H1 (cell line): ENCODE measurements at regions of chr22 and their contacts with region 1.

Region 1: GRCh38 chr22:49992921-49993648 is 19.5 kb downstream of the IL17REL start:
- DNase-seq: peak in 1 of 2 experiments; percentile 73
- H3K4me3 ChIP-seq: no peak overlapping the region
- H3K27ac ChIP-seq: no peak overlapping the region
- H3K4me1 ChIP-seq: peaks cover 0 to 1% (median 0%) of the 10 kb centered on the region in 4 experiments; a peak in 2 of 7 replicates
- H3K27me3 ChIP-seq: peaks cover 0 to 6% (median 0%) of the 10 kb centered on the region in 4 experiments; a peak in 1 of 7 replicates
- CTCF ChIP-seq: peak; percentile 86 to 97 (median 86)
- EP300 ChIP-seq: no peak
- POLR2A ChIP-seq: no peak
- RAD21 ChIP-seq: peak; percentile 72 to 81

Region 2: GRCh38 chr22:49930739-49931412 is 62.2 kb before region 1 on chr22:
- CTCF ChIA-PET with region 1: interaction called, 11 read pairs
- POLR2A ChIA-PET with region 1: no interaction called
- DNase-seq: no peak
- H3K4me3 ChIP-seq: no peak overlapping the region
- H3K27ac ChIP-seq: no peak overlapping the region
- H3K4me1 ChIP-seq: peaks cover 0 to 8% (median 1%) of the 10 kb centered on the region in 4 experiments; a peak in 2 of 7 replicates
- H3K27me3 ChIP-seq: peaks cover 0 to 12% (median 10%) of the 10 kb centered on the region in 4 experiments; a peak in 6 of 7 replicates
- CTCF ChIP-seq: peak in 2 of 3 experiments; percentile 61 to 62; a peak in 3 of 4 replicates
- EP300 ChIP-seq: no peak
- POLR2A ChIP-seq: no peak
- RAD21 ChIP-seq: peak; percentile 64 to 73

Region 3: DNA sequence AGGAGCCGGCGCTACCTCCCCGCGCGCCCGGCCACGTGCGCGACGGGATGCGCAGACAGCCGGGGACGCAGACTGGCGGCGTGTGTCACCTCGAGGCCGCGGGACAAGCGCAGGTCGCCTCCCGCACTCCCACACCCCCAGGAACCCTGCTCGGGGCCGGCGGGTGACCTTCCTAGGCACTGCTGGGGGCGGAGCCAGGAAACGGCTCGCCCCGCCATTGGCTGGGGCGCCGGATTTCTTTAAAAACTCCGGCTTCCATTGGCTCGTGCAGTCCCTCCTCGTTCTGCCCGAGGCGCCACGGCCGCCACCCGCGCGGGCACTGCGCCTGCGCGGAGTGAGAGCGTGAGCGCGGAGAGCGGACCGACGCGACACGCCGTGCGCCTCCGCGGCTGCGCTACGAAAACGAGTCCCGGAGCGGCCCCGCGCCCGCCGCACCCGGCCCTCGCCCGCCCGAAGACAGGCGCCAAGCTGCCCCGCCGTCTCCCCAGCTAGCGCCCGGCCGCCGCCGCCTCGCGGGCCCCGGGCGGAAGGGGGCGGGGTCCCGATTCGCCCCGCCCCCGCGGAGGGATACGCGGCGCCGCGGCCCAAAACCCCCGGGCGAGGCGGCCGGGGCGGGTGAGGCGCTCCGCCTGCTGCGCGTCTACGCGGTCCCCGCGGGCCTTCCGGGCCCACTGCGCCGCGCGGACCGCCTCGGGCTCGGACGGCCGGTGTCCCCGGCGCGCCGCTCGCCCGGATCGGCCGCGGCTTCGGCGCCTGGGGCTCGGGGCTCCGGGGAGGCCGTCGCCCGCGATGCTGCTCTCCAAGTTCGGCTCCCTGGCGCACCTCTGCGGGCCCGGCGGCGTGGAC is 32.7 kb before region 1 on chr22 and contains the start of gene PIM3:
- CTCF ChIA-PET with region 1: no interaction called
- POLR2A ChIA-PET with region 1: no interaction called
- DNase-seq: peak; percentile 66 to 87
- H3K4me3 ChIP-seq: peak within 1 kb of the TSS; percentile 49 to 79 (median 74)
- H3K27ac ChIP-seq: peak within 1 kb of the TSS; percentile 86; the same call in 1 of the 2 replicates
- H3K4me1 ChIP-seq: peaks cover 0 to 22% (median 12%) of the 10 kb centered on the region in 4 experiments; a peak in 5 of 7 replicates
- H3K27me3 ChIP-seq: peaks cover 0 to 12% (median 6%) of the 10 kb centered on the region in 4 experiments; a peak in 6 of 7 replicates
- CTCF ChIP-seq: no peak
- EP300 ChIP-seq: no peak
- POLR2A ChIP-seq: peak in 1 of 2 experiments; percentile 77; a peak in 2 of 3 replicates
- RAD21 ChIP-seq: no peak
- total RNA-seq, gene PIM3: 30.0 and 31.2 TPM in 2 replicates

Region 4: DNA sequence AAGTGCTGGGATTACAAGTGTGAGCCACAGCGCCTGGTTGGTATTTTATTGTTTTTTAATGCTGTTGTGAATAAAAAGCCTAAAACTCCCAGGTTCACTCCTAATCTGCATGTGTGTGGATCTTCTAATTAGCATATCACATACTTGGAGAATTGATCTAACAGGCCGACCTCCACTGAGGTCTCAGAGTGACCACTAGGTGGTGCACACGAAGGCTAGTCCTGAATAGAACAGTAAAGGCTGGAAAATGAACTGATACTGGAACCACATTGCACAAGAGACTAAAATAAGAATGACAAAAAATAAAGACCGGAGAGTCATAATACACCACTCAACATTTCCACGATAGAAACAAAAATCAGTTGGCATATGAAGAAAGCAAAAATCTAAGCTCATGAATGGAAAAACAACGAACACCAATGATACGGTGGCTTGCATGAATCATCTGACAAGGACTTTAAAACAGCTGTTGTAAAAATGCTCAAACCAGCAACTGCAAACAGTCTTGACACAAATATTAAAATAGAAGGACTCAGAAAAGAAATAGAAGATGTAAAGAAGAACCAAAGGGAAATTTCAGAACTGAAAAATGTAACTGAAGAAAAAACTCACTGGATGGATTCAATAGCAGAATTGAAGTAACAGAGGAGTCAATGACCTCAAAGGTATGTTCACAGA is 13.4 kb before region 1 on chr22:
- CTCF ChIA-PET with region 1: interaction called, 83 read pairs
- POLR2A ChIA-PET with region 1: interaction called, 3 read pairs
- DNase-seq: peak in 1 of 2 experiments; percentile 57
- H3K4me3 ChIP-seq: no peak overlapping the region
- H3K27ac ChIP-seq: no peak overlapping the region
- H3K4me1 ChIP-seq: peaks cover 0 to 4% (median 0%) of the 10 kb centered on the region in 4 experiments; a peak in 1 of 7 replicates
- H3K27me3 ChIP-seq: peaks cover 4 to 18% (median 13%) of the 10 kb centered on the region in 4 experiments
- CTCF ChIP-seq: peak; percentile 47 to 90 (median 57)
- EP300 ChIP-seq: no peak
- POLR2A ChIP-seq: no peak
- RAD21 ChIP-seq: peak; percentile 33 to 55; a peak in 3 of 4 replicates

Region 5: GRCh38 chr22:50007057-50007511 is 14.0 kb after region 1 on chr22:
- CTCF ChIA-PET with region 1: interaction called, 16 read pairs
- POLR2A ChIA-PET with region 1: no interaction called
- DNase-seq: no peak
- H3K4me3 ChIP-seq: no peak overlapping the region
- H3K27ac ChIP-seq: no peak overlapping the region
- H3K4me1 ChIP-seq: peaks cover 0 to 13% (median 9%) of the 10 kb centered on the region in 4 experiments; a peak in 6 of 7 replicates
- H3K27me3 ChIP-seq: peaks cover 2 to 22% (median 17%) of the 10 kb centered on the region in 4 experiments
- CTCF ChIP-seq: no peak
- EP300 ChIP-seq: no peak
- POLR2A ChIP-seq: no peak
- RAD21 ChIP-seq: no peak

Region 6: DNA sequence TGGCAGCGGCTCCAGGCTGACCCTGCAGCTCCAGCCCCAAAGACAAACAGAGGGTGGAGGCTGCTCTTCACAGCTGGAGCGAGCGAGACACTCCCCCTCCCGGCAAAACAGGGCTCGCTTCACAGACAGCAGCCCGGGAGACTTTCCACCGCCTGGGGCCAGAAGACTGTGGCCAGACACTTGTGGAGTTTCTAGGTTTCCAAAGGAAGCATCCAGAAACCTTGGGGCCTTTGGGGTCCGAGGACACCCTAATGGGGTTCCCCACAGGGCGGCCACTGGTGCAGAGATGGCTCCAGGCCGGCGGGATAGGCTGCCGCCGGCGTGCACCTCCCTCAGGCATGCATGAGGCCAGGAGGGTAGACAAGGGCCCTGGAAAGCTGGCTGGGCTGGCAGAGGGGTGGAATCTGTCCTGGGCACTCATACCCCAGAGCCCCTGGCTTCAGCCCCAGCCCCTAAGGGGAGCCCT is 19.7 kb after region 1 on chr22 and contains the start of gene IL17REL:
- CTCF ChIA-PET with region 1: interaction called, 16 read pairs
- POLR2A ChIA-PET with region 1: no interaction called
- DNase-seq: peak in 1 of 2 experiments; percentile 54
- H3K4me3 ChIP-seq: no peak within 1 kb of the TSS
- H3K27ac ChIP-seq: no peak within 1 kb of the TSS
- H3K4me1 ChIP-seq: peaks cover 0 to 25% (median 16%) of the 10 kb centered on the region in 4 experiments; a peak in 6 of 7 replicates
- H3K27me3 ChIP-seq: peaks cover 21 to 60% (median 46%) of the 10 kb centered on the region in 4 experiments
- CTCF ChIP-seq: no peak
- EP300 ChIP-seq: no peak
- POLR2A ChIP-seq: no peak
- RAD21 ChIP-seq: no peak
- total RNA-seq, gene IL17REL: 0.08 and 0.20 TPM in 2 replicates

Region 7: DNA sequence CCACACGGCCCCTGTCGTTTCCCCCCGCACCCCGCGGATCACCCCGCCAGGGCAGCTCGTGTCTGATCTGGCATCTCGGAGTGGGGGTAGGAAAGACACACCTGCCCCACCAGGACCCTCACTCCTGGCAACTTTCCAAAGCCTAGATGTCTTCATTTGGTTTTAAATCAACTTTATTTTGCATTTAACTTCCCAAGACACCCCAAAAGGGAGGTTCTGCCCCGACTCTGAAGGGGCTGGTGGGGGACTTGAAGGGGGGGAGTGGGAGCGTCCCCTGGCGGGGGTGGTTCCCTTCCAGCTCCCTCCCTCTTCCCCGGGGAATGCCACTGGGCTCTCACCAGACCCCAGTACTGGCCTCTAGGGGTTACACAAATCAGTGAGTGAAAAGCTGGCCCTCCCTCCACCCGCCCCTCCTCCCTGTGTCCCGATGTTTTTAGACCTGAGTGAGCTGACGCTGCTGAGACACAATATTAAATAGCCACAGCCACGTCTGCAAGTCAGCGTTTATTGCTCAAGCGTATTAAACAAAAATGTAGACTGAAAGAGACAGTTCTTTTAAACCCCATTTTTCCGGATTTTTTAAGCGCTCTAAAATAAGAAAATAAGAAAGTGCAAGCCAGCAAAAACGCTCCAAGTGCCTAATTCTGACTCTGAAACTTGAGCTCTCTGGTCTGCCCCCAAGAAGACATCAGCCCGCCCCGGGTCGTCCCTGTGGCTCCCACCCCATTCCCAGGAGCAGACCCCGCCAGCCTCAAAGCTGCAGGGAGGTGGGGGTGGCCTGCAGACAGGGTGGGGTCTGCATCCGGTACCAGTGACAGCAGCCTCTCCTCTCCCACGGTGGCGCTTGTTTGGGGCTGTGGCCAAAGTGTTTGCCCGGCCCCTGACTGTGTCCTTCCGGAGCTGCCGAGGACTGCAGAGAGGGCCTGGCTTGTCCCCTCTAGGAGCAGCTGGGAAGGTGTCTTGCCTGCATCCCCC is 66.1 kb after region 1 on chr22:
- CTCF ChIA-PET with region 1: interaction called, 11 read pairs
- POLR2A ChIA-PET with region 1: no interaction called
- DNase-seq: peak in 1 of 2 experiments; percentile 27
- H3K4me3 ChIP-seq: peak overlapping the region; percentile 46 to 66 (median 56)
- H3K27ac ChIP-seq: no peak overlapping the region
- H3K4me1 ChIP-seq: peaks cover 0 to 11% (median 2%) of the 10 kb centered on the region in 4 experiments; a peak in 4 of 7 replicates
- H3K27me3 ChIP-seq: peaks cover 8 to 20% (median 11%) of the 10 kb centered on the region in 4 experiments
- CTCF ChIP-seq: peak; percentile 44 to 49 (median 48)
- EP300 ChIP-seq: no peak
- POLR2A ChIP-seq: no peak
- RAD21 ChIP-seq: peak; percentile 27 to 30; a peak in 3 of 4 replicates